ENCODE measurements at regions of chr11 and their contacts with region 1.

Region 1: DNA sequence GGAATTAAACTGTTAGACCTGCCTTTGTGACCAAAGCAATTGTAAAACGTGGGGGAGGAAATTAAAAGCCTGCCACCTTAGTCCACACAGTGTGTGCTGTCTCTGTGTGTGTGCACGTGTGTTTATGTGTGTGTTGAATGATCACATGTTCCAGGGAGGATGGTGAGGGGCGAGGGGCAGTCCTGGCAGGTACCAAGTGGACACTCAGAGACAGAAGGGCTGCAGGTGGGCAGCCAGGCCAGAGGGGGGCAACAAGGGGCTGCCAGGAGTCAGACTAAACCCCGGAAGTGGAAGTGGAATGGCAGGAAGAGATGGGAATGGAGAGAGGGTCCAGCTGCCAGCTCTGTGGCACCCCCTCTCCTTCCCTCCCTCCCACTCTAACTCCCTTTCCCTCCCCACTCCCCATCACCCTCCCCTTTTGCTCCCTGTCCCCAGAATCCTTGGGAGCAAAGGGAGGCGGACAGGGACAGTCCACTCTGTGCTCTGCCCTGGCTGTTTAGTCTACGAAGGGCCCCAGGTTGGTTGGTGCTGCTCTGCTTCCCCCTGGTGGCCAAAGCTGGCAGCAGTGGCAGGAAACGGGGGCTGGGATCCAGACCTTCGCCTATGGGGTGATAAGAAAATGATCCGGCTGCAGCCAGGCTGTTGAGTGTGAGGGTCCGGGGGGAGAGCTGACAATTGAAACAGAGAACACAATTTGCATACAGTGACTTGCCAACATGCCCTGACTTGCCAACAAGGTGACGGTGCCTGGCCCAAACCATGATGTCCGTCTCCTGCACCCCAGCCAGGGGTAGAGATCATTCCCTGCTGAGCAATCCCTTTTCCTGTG is 24.4 kb downstream of the P2RY2 start:
- DNase-seq: peak in 1 of 2 experiments; percentile 79
- H3K4me3 ChIP-seq: no peak overlapping the region
- H3K27ac ChIP-seq: no peak overlapping the region
- H3K4me1 ChIP-seq: peaks cover 44% of the 10 kb centered on the region
- H3K27me3 ChIP-seq: no peaks in the 10 kb centered on the region
- CTCF ChIP-seq: peak; percentile 94

Region 2: GRCh38 chr11:72831513-72832300 is 410.8 kb before region 1 on chr11:
- CTCF ChIA-PET with region 1: interaction called, 3 read pairs
- POLR2A ChIA-PET with region 1: no interaction called
- intact Hi-C with region 1: loop called (anchors 1 kb)
- DNase-seq: peak; percentile 61 to 85
- H3K4me3 ChIP-seq: no peak overlapping the region
- H3K27ac ChIP-seq: no peak overlapping the region
- H3K4me1 ChIP-seq: 0 out of 2 replicates have a peak, but pooled peaks cover 4% of the 10 kb centered on the region
- H3K27me3 ChIP-seq: no peaks in the 10 kb centered on the region
- CTCF ChIP-seq: peak; percentile 97

Region 3: GRCh38 chr11:73227588-73228211 is 14.8 kb before region 1 on chr11:
- CTCF ChIA-PET with region 1: interaction called, 11 read pairs
- POLR2A ChIA-PET with region 1: no interaction called
- intact Hi-C with region 1: no loop called
- DNase-seq: peak; percentile 90 to 97
- H3K4me3 ChIP-seq: 0 out of 2 replicates have a peak overlapping the region, but pooled peaks have one; percentile 2
- H3K27ac ChIP-seq: peak overlapping the region; percentile 50
- H3K4me1 ChIP-seq: peaks cover 49% of the 10 kb centered on the region
- H3K27me3 ChIP-seq: no peaks in the 10 kb centered on the region
- CTCF ChIP-seq: peak; percentile 69

Region 4: DNA sequence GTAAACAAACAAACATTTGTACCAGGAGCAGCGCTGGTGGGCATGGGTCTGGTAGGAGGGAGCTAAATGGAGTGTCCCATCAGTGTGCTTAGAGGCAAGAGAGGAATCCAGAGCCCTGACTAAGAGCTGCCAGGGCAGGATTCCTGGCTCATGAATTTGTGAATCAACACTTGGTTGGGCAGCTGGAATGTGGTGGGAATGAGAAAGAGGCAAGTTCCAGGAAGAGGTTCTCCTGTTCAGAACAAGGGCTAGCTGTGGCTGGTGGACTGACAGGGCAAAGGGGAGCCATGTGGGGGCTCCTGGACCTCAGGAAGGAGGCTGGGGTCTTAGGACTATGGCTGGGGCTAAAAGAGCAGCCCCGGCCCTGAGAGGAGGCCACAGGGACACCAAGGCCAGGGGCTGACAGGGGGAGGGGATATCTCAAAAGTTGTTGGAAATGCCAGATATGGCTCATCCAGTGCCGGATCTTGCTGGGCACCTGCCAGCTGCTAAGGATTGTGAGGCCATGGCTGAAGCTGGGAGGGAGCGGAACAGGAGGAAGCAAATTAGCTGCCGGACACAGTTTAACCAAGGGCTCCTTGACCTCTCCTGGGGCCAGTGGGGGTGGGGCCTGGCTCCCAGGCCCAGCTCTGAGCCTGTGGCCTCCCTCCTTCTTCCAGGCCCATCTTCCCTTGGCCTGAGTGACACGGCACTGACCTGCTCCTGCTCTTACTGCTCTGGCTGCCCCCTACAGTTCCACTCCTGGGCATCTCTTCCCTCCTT is 15.1 kb after region 1 on chr11:
- CTCF ChIA-PET with region 1: interaction called, 4 read pairs
- POLR2A ChIA-PET with region 1: interaction called, 11 read pairs
- intact Hi-C with region 1: no loop called
- DNase-seq: peak; percentile 88 to 99
- H3K4me3 ChIP-seq: peak overlapping the region; percentile 36; the same call in 1 of the 2 replicates
- H3K27ac ChIP-seq: peak overlapping the region; percentile 96
- H3K4me1 ChIP-seq: peaks cover 53% of the 10 kb centered on the region
- H3K27me3 ChIP-seq: no peaks in the 10 kb centered on the region
- CTCF ChIP-seq: no peak

Region 5: DNA sequence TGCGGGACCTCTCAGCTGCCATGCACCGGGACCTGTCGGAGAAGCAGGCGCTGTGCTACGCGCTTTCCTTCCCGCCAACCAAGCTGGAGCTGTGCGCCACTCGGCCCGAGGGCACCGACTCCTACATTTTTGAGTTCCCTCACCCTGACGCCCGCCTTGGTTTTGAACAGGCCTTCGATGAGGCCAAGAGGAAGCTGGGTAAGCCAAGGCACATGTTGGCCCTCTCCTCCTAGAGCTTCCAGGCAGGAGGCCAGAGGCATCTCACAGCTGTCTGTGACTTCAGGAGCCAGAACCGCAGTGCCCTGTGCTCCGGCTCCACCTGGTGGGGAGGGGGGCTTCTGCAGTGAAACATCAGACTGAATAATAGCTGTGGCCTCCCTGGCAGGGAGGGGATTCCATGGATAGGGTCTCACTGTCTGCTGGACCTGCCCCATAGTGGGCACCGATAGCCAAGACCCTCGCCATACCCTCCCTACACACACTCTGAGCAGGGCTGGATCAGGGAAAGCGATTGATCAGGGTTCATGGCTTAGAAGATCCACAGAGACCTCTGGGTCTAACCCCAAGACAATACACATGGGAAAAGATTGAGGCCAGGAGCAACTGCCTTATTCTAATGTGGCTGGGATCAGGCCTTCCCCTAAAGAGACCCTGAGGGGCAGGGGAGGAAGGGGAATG is 118.0 kb after region 1 on chr11:
- CTCF ChIA-PET with region 1: no interaction called
- POLR2A ChIA-PET with region 1: no interaction called
- intact Hi-C with region 1: no loop called
- DNase-seq: peak in 1 of 2 experiments; percentile 32
- H3K4me3 ChIP-seq: no peak overlapping the region
- H3K27ac ChIP-seq: no peak overlapping the region
- H3K4me1 ChIP-seq: no peaks in the 10 kb centered on the region
- H3K27me3 ChIP-seq: no peaks in the 10 kb centered on the region
- CTCF ChIP-seq: peak; percentile 71

Measured in PC-9 (cell line).